Activated CD4-positive, alpha-beta T cell treated with anti-CD3 and anti-CD28 coated beads for 36 hours (primary cell): ENCODE measurements at regions of chr5 and their contacts with region 1.

Region 1: GRCh38 chr5:173057062-173057924 is 1.1 kb downstream of the CREBRF start:
- DNase-seq: peak; percentile 100
- ATAC-seq: peak; percentile 90
- H3K4me3 Mint-ChIP-seq: peak overlapping the region; percentile 95
- H3K27ac Mint-ChIP-seq: peak overlapping the region; percentile 97
- H3K4me1 Mint-ChIP-seq: peaks cover 53% of the 10 kb centered on the region
- H3K27me3 Mint-ChIP-seq: no peaks in the 10 kb centered on the region

Region 2: GRCh38 chr5:172764849-172765765 is 292.2 kb before region 1 on chr5:
- CTCF ChIA-PET with region 1: no interaction called
- POLR2A ChIA-PET with region 1: no interaction called
- intact Hi-C with region 1: loop called (anchors 2 kb)
- DNase-seq: peak; percentile 96
- ATAC-seq: peak; percentile 93
- H3K4me3 Mint-ChIP-seq: peak overlapping the region; percentile 72
- H3K27ac Mint-ChIP-seq: peak overlapping the region; percentile 91
- H3K4me1 Mint-ChIP-seq: peaks cover 45% of the 10 kb centered on the region
- H3K27me3 Mint-ChIP-seq: no peaks in the 10 kb centered on the region

Region 3: GRCh38 chr5:172958331-172959046 is 98.8 kb before region 1 on chr5:
- CTCF ChIA-PET with region 1: no interaction called
- POLR2A ChIA-PET with region 1: no interaction called
- intact Hi-C with region 1: loop called (anchors 1 kb)
- DNase-seq: peak; percentile 83
- ATAC-seq: peak; percentile 76
- H3K4me3 Mint-ChIP-seq: peak overlapping the region; percentile 93
- H3K27ac Mint-ChIP-seq: peak overlapping the region; percentile 94
- H3K4me1 Mint-ChIP-seq: peaks cover 17% of the 10 kb centered on the region
- H3K27me3 Mint-ChIP-seq: no peaks in the 10 kb centered on the region

Region 4: DNA sequence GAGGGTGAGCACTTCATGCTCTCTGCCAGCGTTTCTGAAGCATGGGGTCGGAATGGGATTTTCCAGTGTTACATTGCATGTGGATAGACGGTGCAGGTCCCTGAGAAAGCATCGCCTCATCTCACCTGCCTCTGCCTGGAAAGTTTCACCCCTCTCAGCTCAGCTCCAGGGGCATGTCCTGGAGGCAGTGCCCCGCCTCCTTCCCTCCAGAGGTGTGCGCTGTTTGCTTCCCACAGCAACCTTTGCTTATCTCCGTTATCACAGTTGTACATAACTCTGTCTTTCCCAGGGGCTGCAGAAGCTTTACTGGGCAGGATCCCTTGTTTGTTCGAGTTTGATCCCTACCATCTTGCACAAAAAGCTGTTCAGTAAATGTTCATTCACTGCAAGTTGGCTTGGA is 11.8 kb before region 1 on chr5:
- CTCF ChIA-PET with region 1: interaction called, 10 read pairs
- POLR2A ChIA-PET with region 1: interaction called, 15 read pairs
- intact Hi-C with region 1: no loop called
- DNase-seq: no peak
- ATAC-seq: no peak
- H3K4me3 Mint-ChIP-seq: no peak overlapping the region
- H3K27ac Mint-ChIP-seq: no peak overlapping the region
- H3K4me1 Mint-ChIP-seq: peaks cover 1% of the 10 kb centered on the region
- H3K27me3 Mint-ChIP-seq: no peaks in the 10 kb centered on the region

Region 5: GRCh38 chr5:173887610-173888472 is 830.5 kb after region 1 on chr5 and contains the start of gene CPEB4:
- CTCF ChIA-PET with region 1: no interaction called
- POLR2A ChIA-PET with region 1: no interaction called
- intact Hi-C with region 1: loop called in 1 of 2 experiments (anchors 1 kb)
- DNase-seq: peak; percentile 98
- ATAC-seq: peak; percentile 96
- H3K4me3 Mint-ChIP-seq: peak within 1 kb of the TSS; percentile 96
- H3K27ac Mint-ChIP-seq: peak within 1 kb of the TSS; percentile 98
- H3K4me1 Mint-ChIP-seq: peaks cover 67% of the 10 kb centered on the region
- H3K27me3 Mint-ChIP-seq: no peaks in the 10 kb centered on the region
- total RNA-seq, gene CPEB4: 5.6 to 8.3 TPM